ENCODE measurements at regions of chr11 and their contacts with region 1.

Region 1: DNA sequence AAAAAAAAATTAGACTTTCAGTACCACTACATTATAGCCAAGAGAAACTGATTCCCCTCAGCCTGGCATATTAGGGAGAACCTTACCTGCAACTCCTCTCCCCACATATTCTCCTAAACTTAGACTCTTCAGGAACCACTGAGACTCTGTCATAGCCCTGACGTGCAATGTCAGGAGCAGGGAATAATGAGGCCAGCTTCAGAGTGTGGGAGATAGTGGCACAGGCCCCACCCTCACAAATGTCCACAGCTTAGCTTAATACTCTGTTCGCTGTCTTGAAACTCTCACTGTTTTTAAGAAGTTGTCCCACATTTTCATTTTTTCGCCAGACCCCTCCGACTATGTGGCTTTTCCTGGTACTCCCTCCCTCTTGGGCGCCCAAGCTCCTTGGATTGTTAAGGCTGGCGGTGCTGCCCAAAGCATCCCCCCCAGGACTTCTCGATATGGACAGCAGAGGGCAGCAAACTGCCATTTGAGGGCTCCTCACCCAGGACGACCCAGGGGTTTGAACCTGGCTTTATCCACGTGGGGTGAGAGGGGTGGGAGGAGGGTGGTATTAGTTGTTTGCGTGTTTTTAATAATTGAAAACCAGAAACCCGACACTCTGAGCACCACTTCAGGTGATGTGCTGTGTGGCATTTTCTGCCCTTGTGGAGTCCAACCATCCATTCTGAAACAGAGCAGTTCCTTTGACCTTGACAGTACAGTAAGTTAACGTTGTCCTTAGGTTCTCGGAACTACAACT is 45.2 kb upstream of the RASSF10 start:
- DNase-seq: peak; percentile 52
- H3K4me3 ChIP-seq: no peak overlapping the region
- H3K27ac ChIP-seq: no peak overlapping the region
- H3K4me1 ChIP-seq: peaks cover 3% of the 10 kb centered on the region
- H3K27me3 ChIP-seq: no peaks in the 10 kb centered on the region
- CTCF ChIP-seq: peak; percentile 92

Region 2: DNA sequence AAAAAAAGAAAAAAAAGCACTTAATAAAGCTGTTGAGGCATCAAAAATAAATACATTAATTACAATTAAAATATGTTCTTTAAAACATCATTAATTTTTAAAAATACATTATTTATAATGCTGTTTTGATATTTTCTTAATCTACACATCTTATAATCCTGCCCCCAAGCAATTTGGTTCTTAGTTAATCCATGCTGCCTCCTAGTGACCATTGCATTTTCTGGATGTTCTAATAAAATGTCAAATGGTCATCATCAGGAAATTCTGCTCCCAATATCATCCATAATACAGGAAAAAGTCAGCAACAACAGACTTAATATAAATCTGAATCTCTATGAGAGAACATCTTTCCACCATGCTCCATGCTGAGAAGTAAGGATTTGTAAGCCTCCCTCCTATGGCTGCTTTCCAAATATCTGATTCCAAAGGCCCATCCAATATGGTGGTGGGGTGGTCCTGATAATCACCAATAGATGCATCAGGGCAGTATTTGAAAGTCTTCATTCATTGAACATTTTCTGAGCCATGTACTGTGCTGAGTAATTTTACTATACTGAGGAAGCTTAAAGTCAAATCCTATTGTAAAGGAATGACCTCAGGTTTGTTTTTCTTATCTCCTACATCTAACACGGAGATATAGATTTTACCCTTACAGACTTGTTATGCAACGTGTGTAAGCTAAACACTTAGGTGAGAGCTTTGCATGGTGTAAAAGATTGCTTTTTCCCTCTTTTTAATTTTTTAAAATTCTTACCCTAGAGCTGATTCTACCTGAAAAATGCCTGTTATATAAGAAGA is 189.0 kb after region 1 on chr11:
- intact Hi-C with region 1: loop called (anchors 5 kb)
- DNase-seq: no peak
- H3K4me3 ChIP-seq: no peak overlapping the region
- H3K27ac ChIP-seq: no peak overlapping the region
- H3K4me1 ChIP-seq: no peaks in the 10 kb centered on the region
- H3K27me3 ChIP-seq: no peaks in the 10 kb centered on the region
- CTCF ChIP-seq: peak; percentile 58

Region 3: GRCh38 chr11:13169709-13170108 is 205.7 kb after region 1 on chr11:
- intact Hi-C with region 1: no loop called
- DNase-seq: no peak
- H3K4me3 ChIP-seq: no peak overlapping the region
- H3K27ac ChIP-seq: no peak overlapping the region
- H3K4me1 ChIP-seq: no peaks in the 10 kb centered on the region
- H3K27me3 ChIP-seq: peaks cover 12% of the 10 kb centered on the region
- CTCF ChIP-seq: no peak

Region 4: DNA sequence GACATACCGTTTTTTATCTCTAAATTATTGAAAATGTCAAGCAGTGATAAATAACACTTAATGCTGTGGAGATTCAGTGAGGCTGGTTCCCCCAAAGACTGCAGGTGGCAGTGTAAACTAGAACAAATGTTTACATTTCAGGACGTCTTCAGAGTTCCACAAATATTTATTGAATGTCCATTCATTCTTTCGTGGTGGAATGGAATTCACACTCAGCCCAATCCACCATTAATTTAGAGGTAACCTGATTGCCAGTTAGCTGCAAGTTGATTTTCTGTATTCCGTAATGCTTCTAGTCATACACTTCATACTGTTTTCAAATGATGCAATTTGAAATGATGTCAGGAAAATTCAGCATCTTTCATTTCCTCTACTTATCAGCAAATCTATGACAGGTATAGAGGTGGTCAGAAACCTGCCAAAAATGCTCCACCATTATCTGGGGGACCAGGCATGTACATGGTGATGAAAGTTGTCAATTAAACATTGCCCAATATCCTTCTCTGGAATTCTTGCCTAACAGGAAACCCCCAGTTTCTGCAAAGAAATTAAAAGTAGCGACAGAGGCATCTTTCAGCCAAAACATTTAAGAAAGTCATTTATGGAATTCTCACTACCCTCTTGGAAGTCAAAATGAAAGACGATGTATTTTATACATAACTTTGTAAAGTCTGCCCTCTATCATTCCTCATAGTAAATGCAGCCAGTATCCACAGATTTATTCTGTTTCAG is 219.3 kb after region 1 on chr11:
- intact Hi-C with region 1: loop called (anchors 10 kb)
- DNase-seq: no peak
- H3K4me3 ChIP-seq: peak overlapping the region; percentile 49
- H3K27ac ChIP-seq: no peak overlapping the region
- H3K4me1 ChIP-seq: peaks cover 6% of the 10 kb centered on the region
- H3K27me3 ChIP-seq: peaks cover 2% of the 10 kb centered on the region
- CTCF ChIP-seq: peak; percentile 57